Right cardiac atrium (tissue), 5 donors: ENCODE measurements at regions of chr17 and their contacts with region 1.

Region 1: DNA sequence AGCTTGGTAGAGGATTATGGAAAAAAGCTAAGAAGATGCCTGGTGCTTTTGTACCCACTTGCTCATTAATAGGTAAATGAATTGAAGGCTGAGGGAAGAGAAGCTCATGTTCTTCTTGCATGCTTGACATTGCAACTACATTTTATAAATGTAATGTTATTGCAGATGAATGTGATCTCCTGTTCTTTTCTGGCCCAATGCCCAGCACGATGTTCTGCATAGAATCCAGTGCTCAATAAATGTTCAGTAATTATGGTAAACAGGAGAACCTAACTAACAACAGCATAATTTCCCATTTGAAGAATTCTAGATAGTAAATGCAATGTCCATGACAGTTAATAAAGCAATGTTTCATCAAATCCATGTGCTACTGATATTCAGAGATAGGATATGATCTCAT is 638.2 kb upstream of the SOX9 start:
- DNase-seq: no peak
- ATAC-seq: no peak
- H3K4me3 ChIP-seq: no peak overlapping the region
- H3K27ac ChIP-seq: no peak overlapping the region
- H3K4me1 ChIP-seq: no peaks in the 10 kb centered on the region
- H3K27me3 ChIP-seq: no peaks in the 10 kb centered on the region

Region 2: GRCh38 chr17:71432378-71433315 is 50.0 kb before region 1 on chr17:
- intact Hi-C with region 1: loop called in 1 of 4 experiments (anchors 5 kb)
- DNase-seq: no peak
- ATAC-seq: no peak
- H3K4me3 ChIP-seq: no peak overlapping the region
- H3K27ac ChIP-seq: no peak overlapping the region
- H3K4me1 ChIP-seq: no peaks in the 10 kb centered on the region
- H3K27me3 ChIP-seq: no peaks in the 10 kb centered on the region

Region 3: GRCh38 chr17:71530248-71530647 is 47.6 kb after region 1 on chr17:
- intact Hi-C with region 1: no loop called
- DNase-seq: no peak
- ATAC-seq: no peak
- H3K4me3 ChIP-seq: no peak overlapping the region
- H3K27ac ChIP-seq: no peak overlapping the region
- H3K4me1 ChIP-seq: no peaks in the 10 kb centered on the region
- H3K27me3 ChIP-seq: no peaks in the 10 kb centered on the region